ENCODE measurements at regions of chr13 and their contacts with region 1.

Region 1: DNA sequence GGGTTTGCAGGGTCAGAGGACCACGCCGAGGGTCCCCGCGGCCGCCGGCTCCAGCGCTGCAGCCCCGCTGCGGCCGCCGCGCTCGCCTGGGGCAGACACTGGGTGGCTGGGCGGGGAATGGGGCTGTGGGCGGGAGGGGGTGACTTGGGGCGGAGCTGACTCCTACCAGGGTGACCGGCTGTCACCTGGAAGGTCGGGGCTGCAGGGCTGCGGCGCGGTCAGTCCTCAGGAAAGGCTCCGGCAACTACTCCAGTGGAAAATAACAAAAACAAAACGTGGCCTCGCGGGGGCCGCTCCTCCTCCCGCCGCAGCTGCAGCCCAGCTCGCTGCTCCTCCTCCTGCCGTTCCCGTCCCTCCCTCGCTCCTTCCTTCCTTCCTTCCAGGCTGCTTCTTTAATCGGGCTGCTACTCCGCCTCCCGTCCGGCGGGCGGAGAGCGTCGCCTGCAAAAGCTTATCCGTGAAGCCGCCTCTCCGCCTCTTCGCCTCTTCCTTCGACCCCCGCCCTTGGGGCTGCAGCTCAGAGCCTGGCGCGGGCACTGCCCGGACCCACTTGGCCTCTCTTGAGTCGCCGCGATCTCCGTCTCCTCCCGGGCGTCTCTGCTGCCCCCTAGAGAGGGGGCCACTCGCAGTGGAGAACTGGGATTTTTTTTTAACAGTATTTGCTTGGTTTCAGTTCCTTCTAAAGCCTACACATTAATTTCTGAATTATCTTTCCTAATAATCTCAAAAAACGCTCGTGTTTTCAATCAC is at the start of gene TBC1D4:
- DNase-seq: peak; percentile 87
- H3K4me3 Mint-ChIP-seq: peak within 1 kb of the TSS; percentile 99
- H3K27ac Mint-ChIP-seq: peak within 1 kb of the TSS; percentile 86
- H3K4me1 Mint-ChIP-seq: peaks cover 36% of the 10 kb centered on the region
- H3K27me3 Mint-ChIP-seq: peaks cover 47% of the 10 kb centered on the region
- total RNA-seq, gene TBC1D4: 72.3 and 77.0 TPM in 2 replicates

Region 2: DNA sequence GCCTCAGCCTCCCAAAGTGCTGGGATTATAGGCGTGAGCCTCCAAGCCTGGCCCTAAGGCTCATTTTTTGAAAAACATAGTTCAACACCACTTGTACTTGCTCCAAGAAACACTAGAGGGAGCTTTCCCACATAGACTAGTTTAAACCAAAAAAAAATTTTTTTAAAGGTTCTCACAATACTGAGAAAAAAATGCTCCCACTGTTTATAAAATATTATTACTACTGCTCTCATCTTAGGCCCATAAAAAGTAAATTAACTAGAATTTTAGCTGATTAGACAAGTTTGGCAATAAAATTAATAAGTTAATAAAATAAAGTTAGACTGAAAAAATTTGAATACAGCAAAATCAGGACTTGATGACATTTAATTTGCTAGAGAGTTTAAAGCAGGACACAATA is 109.7 kb before region 1 on chr13:
- intact Hi-C with region 1: loop called (anchors 1 kb)
- DNase-seq: peak; percentile 73
- H3K4me3 Mint-ChIP-seq: no peak overlapping the region
- H3K27ac Mint-ChIP-seq: no peak overlapping the region
- H3K4me1 Mint-ChIP-seq: peaks cover 11% of the 10 kb centered on the region
- H3K27me3 Mint-ChIP-seq: no peaks in the 10 kb centered on the region

Region 3: GRCh38 chr13:75537401-75538365 is 55.4 kb after region 1 on chr13 and contains the start of gene COMMD6:
- intact Hi-C with region 1: loop called (anchors 2 kb)
- DNase-seq: peak; percentile 92
- H3K4me3 Mint-ChIP-seq: peak within 1 kb of the TSS; percentile 94
- H3K27ac Mint-ChIP-seq: peak within 1 kb of the TSS; percentile 90
- H3K4me1 Mint-ChIP-seq: peaks cover 29% of the 10 kb centered on the region
- H3K27me3 Mint-ChIP-seq: no peaks in the 10 kb centered on the region
- total RNA-seq, gene COMMD6: 100 and 108 TPM in 2 replicates

Measured in activated CD4-positive, alpha-beta T cell treated with anti-CD3 and anti-CD28 coated beads, Interleukin-2, amount 10 ng/mL, durations not matched to agents 24 days and 14 days (primary cell).